Naive thymus-derived CD8-positive, alpha-beta T cell (primary cell): ENCODE measurements at regions of chr5 and their contacts with region 1.

Region 1: GRCh38 chr5:217860-218456 is at the starts of genes CCDC127 and SDHA:
- DNase-seq: peak; percentile 95 to 100 (median 99)
- ATAC-seq: peak; percentile 86 to 89
- H3K4me3 Mint-ChIP-seq: peak within 1 kb of the TSS; percentile 90 to 97 (median 95)
- H3K27ac Mint-ChIP-seq: peak within 1 kb of the TSS; percentile 86 to 98 (median 96)
- H3K4me1 Mint-ChIP-seq: peaks cover 17 to 66% (median 62%) of the 10 kb centered on the region in 4 donors
- H3K27me3 Mint-ChIP-seq: no peaks in the 10 kb centered on the region
- polyA plus RNA-seq, gene CCDC127: 3.2 to 4.4 (median 3.5) TPM
- polyA plus RNA-seq, gene SDHA: 160 to 200 (median 165) TPM

Region 2: GRCh38 chr5:188488-189481 is 29.2 kb before region 1 on chr5:
- POLR2A ChIA-PET with region 1: interaction called, 32 read pairs
- DNase-seq: peak; percentile 78 to 92 (median 85)
- ATAC-seq: peak; percentile 96
- H3K4me3 Mint-ChIP-seq: peak overlapping the region; percentile 19 to 80 (median 52)
- H3K27ac Mint-ChIP-seq: peak overlapping the region in 5 of 10 donors; percentile 3 to 69 (median 67)
- H3K4me1 Mint-ChIP-seq: peaks cover 3 to 16% (median 10%) of the 10 kb centered on the region in 4 donors
- H3K27me3 Mint-ChIP-seq: peaks cover 0 to 6% (median 4%) of the 10 kb centered on the region in 5 donors

Region 3: GRCh38 chr5:285639-286557 is 67.9 kb after region 1 on chr5:
- POLR2A ChIA-PET with region 1: no interaction called
- DNase-seq: no peak
- ATAC-seq: no peak
- H3K4me3 Mint-ChIP-seq: peak overlapping the region in 1 of 10 donors; percentile 51
- H3K27ac Mint-ChIP-seq: peak overlapping the region in 1 of 10 donors; percentile 84
- H3K4me1 Mint-ChIP-seq: peaks cover 42 to 57% (median 52%) of the 10 kb centered on the region in 4 donors
- H3K27me3 Mint-ChIP-seq: no peaks in the 10 kb centered on the region

Region 4: DNA sequence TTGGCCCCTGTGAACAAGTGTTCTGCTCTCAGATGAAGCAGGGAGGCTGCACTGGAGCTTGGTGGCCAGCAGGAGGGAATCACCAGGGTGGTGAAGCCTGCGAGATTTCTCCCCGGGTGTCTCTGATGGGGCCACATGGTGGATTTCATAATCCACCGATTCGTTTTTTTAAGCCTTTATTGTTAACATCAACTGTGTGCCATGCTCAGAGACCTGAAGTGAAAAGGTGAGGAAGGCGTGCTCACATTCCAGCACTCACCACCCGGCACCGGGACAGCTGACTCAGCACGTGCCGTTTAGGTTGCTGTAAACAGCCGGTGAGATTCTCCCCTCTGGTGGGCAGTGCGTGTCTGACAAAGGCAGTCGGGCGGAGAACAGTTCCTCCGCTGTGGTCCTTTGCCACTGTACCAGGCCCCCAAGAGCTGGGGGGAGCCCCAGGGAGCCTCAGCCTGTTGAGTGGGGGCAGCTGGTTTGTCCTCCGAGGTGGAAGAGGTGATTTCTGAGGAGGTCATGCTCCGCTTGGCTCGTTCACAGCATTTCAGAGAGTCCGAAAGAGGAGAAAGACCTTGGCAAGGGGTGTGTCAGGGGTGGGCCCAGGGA is 90.8 kb after region 1 on chr5:
- POLR2A ChIA-PET with region 1: no interaction called
- DNase-seq: no peak
- ATAC-seq: no peak
- H3K4me3 Mint-ChIP-seq: no peak overlapping the region
- H3K27ac Mint-ChIP-seq: no peak overlapping the region
- H3K4me1 Mint-ChIP-seq: peaks cover 0 to 7% (median 2%) of the 10 kb centered on the region in 4 donors
- H3K27me3 Mint-ChIP-seq: no peaks in the 10 kb centered on the region